ENCODE measurements at regions of chr14 and their contacts with region 1.

Region 1: GRCh38 chr14:89000007-89000942 is 175.8 kb downstream of the TTC8 start:
- DNase-seq: peak; percentile 93
- H3K4me3 ChIP-seq: no peak overlapping the region
- H3K27ac ChIP-seq: peak overlapping the region; percentile 45
- H3K4me1 ChIP-seq: peaks cover 19% of the 10 kb centered on the region
- H3K27me3 ChIP-seq: no peaks in the 10 kb centered on the region
- CTCF ChIP-seq: no peak

Region 2: GRCh38 chr14:88792572-88793258 is 207.6 kb before region 1 on chr14 and contains the start of gene EML5:
- CTCF ChIA-PET with region 1: no interaction called
- dilution Hi-C with region 1: no loop called
- in situ Hi-C with region 1: no loop called
- intact Hi-C with region 1: loop called (anchors 5 kb)
- DNase-seq: peak; percentile 84
- H3K4me3 ChIP-seq: peak within 1 kb of the TSS; percentile 68 to 80 (median 71)
- H3K27ac ChIP-seq: peak within 1 kb of the TSS; percentile 25
- H3K4me1 ChIP-seq: peaks cover 5% of the 10 kb centered on the region
- H3K27me3 ChIP-seq: no peaks in the 10 kb centered on the region
- CTCF ChIP-seq: peak; percentile 17 to 44
- total RNA-seq, gene EML5: 0.33 to 2.7 TPM

Region 3: GRCh38 chr14:88929656-88930425 is 70.4 kb before region 1 on chr14:
- CTCF ChIA-PET with region 1: no interaction called
- dilution Hi-C with region 1: no loop called
- in situ Hi-C with region 1: no loop called
- intact Hi-C with region 1: no loop called
- DNase-seq: no peak
- H3K4me3 ChIP-seq: no peak overlapping the region
- H3K27ac ChIP-seq: no peak overlapping the region
- H3K4me1 ChIP-seq: no peaks in the 10 kb centered on the region
- H3K27me3 ChIP-seq: no peaks in the 10 kb centered on the region
- CTCF ChIP-seq: peak in 1 of 2 donors; percentile 14

Region 4: DNA sequence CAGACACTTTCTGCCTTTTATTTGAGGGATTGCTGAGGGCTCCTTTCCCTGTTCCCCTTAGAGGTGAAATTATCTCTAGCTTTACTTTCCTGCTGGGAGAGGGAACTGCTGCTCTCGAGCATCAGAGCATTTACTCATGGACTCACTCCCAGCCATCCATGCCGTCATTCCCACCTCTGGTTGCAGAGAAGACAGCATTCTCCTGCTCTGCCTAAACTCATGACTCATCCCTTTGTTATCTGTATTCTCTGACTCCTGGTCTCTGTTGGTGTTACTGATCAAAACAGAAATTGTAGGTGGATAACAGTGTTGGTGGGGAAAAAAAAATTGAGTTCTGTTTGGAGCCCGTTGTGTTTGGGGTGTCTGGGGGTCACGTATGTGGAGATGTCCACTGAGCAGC is 16.5 kb before region 1 on chr14:
- CTCF ChIA-PET with region 1: no interaction called
- dilution Hi-C with region 1: no loop called
- in situ Hi-C with region 1: no loop called
- intact Hi-C with region 1: loop called (anchors 1 kb)
- DNase-seq: peak; percentile 92
- H3K4me3 ChIP-seq: no peak overlapping the region
- H3K27ac ChIP-seq: peak overlapping the region; percentile 72
- H3K4me1 ChIP-seq: peaks cover 41% of the 10 kb centered on the region
- H3K27me3 ChIP-seq: no peaks in the 10 kb centered on the region
- CTCF ChIP-seq: no peak

Measured in mammary epithelial cell (primary cell).